ENCODE measurements at regions of chr9 and their contacts with region 1.

Region 1: DNA sequence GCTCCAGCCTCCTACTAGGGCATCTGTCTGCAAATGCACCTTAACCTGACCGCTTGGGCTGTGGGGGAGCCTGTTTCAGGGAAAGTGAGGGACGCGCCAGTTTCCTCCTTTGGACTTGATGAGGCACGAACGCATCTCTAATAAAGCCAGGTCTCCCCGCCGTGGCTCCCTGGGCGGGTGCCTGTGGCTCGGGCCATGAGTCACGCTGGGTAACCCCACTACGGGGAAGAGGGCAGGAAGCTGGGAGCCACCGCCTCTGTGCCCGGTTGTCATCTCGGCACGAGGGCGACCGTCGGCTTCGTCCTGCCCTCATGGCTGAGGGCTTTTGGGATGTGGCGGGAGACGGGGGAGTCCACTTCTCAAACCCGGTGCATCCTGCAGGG is 12.1 kb downstream of the NOTCH1 start:
- DNase-seq: peak; percentile 34 to 85 (median 79)
- ATAC-seq: peak; percentile 61
- H3K4me3 ChIP-seq: peak overlapping the region; percentile 39 to 45
- H3K4me3 Mint-ChIP-seq: peak overlapping the region; percentile 70
- H3K27ac ChIP-seq: peak overlapping the region; percentile 59 to 84
- H3K27ac Mint-ChIP-seq: peak overlapping the region; percentile 85
- H3K4me1 ChIP-seq: peaks cover 93% of the 10 kb centered on the region
- H3K4me1 Mint-ChIP-seq: peaks cover 47% of the 10 kb centered on the region
- H3K27me3 ChIP-seq: no peaks in the 10 kb centered on the region
- H3K27me3 Mint-ChIP-seq: no peaks in the 10 kb centered on the region
- CTCF ChIP-seq: no peak

Region 2: DNA sequence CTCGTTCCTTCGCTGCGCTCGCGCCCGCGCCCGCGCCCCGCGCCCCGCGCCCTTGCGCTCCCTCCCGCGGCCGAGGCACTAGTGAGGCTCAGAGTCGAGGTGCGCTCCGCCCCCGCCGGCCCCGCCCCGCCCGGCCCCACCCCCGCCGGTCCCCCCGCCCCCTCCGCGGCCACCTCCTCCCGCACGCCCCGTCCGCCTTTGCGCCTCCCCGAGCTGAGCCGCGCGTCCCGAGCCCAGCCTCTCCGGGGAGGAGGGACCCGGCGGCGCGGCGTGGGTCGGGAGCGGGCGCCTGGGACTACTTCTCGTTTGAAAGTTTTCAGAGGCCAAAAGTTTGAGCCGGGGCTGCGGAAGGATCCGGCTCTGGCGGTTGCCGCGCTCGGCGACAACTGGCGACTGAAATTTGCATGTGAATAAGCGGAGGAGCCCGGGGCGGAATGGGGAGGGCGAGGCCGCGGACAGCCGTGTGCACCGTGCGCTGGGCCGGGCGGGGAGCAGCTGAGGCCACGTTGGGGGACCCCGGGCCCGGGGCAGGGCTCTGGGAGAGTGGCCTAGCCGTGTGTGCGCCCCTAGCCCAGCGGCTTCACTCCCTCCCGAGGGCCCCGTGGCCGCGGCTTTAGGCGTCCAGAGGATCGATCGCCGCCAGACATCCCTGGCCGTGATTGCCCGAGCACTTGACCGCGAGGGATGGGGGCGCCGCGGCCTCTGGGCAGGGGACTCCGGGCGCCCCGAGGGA is 12.4 kb after region 1 on chr9 and contains the start of gene NOTCH1:
- CTCF ChIA-PET with region 1: interaction called, 9 read pairs
- POLR2A ChIA-PET with region 1: interaction called, 4 read pairs
- intact Hi-C with region 1: loop called in 1 of 2 experiments (anchors 1 kb)
- DNase-seq: peak; percentile 75 to 91 (median 83)
- ATAC-seq: peak; percentile 78
- H3K4me3 ChIP-seq: peak within 1 kb of the TSS; percentile 82 to 90
- H3K4me3 Mint-ChIP-seq: peak within 1 kb of the TSS; percentile 85
- H3K27ac ChIP-seq: peak within 1 kb of the TSS; percentile 50 to 55
- H3K27ac Mint-ChIP-seq: peak within 1 kb of the TSS; percentile 85
- H3K4me1 ChIP-seq: peaks cover 31% of the 10 kb centered on the region
- H3K4me1 Mint-ChIP-seq: peaks cover 27% of the 10 kb centered on the region
- H3K27me3 ChIP-seq: no peaks in the 10 kb centered on the region
- H3K27me3 Mint-ChIP-seq: no peaks in the 10 kb centered on the region
- CTCF ChIP-seq: no peak
- total RNA-seq, gene NOTCH1: 29.0 to 30.0 TPM